Activated CD4-positive, alpha-beta T cell treated with anti-CD3 and anti-CD28 coated beads, Interleukin-2, amount 10 ng/mL, durations not matched to agents 24 days and 14 days (primary cell): ENCODE measurements at regions of chr1 and their contacts with region 1.

Region 1: DNA sequence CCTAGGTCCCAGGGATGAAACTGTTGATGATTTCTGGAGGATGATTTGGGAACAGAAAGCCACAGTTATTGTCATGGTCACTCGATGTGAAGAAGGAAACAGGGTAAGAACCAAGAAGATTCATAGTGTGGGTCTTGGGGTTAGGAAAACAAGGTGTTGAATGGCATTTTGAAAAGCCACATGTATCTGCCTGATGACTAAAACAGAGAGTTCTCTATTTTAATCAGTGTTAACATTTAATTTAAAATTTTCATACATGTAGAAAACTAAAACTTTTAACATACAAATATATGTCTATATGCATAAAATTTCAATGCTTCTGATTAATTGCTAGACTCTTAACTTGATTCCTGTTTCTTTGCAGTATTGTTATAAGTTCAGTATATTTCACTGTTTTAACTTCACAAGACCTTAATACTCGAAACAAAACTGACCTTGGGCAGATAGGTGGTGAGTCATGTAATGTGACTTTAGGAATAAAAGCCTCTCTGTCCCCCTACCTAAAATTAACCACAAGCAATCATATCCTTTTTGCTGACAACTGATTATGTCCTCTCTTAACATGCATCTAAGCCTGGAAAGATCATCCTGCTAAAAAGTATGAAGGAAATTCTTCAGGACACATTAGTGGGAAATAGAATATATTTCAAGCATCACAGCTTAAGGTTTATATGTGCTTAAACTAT is 95.6 kb downstream of the PTPRC start:
- DNase-seq: no peak
- H3K4me3 Mint-ChIP-seq: peak overlapping the region; percentile 41
- H3K27ac Mint-ChIP-seq: peak overlapping the region; percentile 90
- H3K4me1 Mint-ChIP-seq: peaks cover 50% of the 10 kb centered on the region
- H3K27me3 Mint-ChIP-seq: no peaks in the 10 kb centered on the region

Region 2: DNA sequence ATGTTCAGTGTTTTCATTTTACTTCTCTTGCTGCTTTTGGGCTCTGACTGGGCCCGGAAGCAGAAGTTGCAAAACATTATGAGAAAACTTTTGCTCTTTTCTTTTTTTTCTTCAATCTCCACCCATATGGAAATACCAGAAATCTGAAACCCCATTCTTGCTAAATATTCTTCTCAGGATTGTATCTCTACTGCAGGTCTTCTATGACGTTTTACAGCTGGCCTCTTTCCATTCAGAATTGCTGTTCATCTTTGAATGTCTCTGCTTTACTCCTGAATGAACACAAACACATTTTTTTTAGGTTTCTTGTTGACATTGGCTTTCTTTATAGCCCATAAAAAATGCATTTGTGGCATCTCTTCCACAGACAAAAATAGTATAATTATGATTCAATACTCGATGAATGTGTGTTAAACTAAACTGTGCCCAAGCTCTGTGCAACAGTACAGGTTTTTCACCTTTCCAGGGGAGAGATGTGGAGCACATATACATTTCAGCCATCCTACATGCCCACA is 76.9 kb before region 1 on chr1:
- intact Hi-C with region 1: loop called (anchors 2 kb)
- DNase-seq: peak; percentile 77
- H3K4me3 Mint-ChIP-seq: peak overlapping the region; percentile 92
- H3K27ac Mint-ChIP-seq: peak overlapping the region; percentile 86
- H3K4me1 Mint-ChIP-seq: peaks cover 43% of the 10 kb centered on the region
- H3K27me3 Mint-ChIP-seq: no peaks in the 10 kb centered on the region

Region 3: GRCh38 chr1:198699167-198700015 is 35.1 kb before region 1 on chr1:
- intact Hi-C with region 1: loop called (anchors 5 kb)
- DNase-seq: peak; percentile 86
- H3K4me3 Mint-ChIP-seq: peak overlapping the region; percentile 41
- H3K27ac Mint-ChIP-seq: peak overlapping the region; percentile 83
- H3K4me1 Mint-ChIP-seq: peaks cover 68% of the 10 kb centered on the region
- H3K27me3 Mint-ChIP-seq: no peaks in the 10 kb centered on the region

Region 4: GRCh38 chr1:198756470-198756869 is 22.0 kb after region 1 on chr1:
- intact Hi-C with region 1: no loop called
- DNase-seq: no peak
- H3K4me3 Mint-ChIP-seq: no peak overlapping the region
- H3K27ac Mint-ChIP-seq: no peak overlapping the region
- H3K4me1 Mint-ChIP-seq: peaks cover 7% of the 10 kb centered on the region
- H3K27me3 Mint-ChIP-seq: no peaks in the 10 kb centered on the region

Region 5: DNA sequence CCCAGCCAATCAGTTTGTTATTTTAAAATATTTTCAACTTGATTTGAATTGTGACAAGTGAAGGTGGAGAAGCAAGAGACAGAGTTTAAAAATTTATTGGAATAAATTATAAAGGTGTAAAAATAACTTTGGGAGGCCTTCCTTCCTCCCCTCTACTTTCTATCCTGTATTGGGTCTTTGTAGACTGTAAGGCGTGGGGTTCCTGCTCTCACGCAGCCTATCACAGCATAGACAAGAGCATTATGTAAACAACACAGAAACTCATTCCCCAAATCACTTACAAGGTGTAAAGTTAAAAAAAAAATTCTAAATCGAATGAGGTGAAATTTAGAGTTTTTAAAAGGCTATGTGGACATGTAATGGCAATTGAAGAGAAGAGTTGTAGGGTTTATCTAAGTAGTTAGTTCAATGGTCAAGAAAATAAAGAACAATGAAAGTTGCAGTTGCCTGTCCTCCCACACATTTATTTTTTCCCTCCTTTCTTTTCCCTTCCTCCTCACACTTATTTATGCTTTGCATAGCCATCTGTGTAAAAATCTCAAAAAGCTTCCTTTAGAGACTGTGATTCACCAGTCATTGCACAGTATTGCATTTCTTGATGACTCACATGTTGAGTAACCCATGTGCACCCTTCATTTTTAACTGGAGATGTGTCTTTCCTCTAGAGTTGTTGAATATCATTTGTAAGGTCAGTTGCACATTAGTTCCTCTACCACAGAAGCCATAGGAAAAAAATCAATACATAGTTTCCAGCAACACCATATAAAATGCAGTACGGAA is 146.5 kb after region 1 on chr1:
- intact Hi-C with region 1: loop called (anchors 10 kb)
- DNase-seq: no peak
- H3K4me3 Mint-ChIP-seq: peak overlapping the region; percentile 23
- H3K27ac Mint-ChIP-seq: peak overlapping the region; percentile 86
- H3K4me1 Mint-ChIP-seq: peaks cover 34% of the 10 kb centered on the region
- H3K27me3 Mint-ChIP-seq: no peaks in the 10 kb centered on the region